A549 (cell line): ENCODE measurements at regions of chr15 and their contacts with region 1.

Region 1: GRCh38 chr15:33215941-33216872 is 21.7 kb upstream of the FMN1 start:
- DNase-seq: peak in 1 of 2 experiments; percentile 53
- ATAC-seq: peak; percentile 59 to 75; a peak in 4 of 6 replicates
- H3K4me3 ChIP-seq: no peak overlapping the region
- H3K27ac ChIP-seq: no peak overlapping the region
- H3K4me1 ChIP-seq: no peaks in the 10 kb centered on the region
- CTCF ChIP-seq: peak; percentile 72
- EP300 ChIP-seq: no peak
- POLR2A ChIP-seq: no peak
- RAD21 ChIP-seq: peak; percentile 30 to 47; a peak in 3 of 5 replicates

Region 2: DNA sequence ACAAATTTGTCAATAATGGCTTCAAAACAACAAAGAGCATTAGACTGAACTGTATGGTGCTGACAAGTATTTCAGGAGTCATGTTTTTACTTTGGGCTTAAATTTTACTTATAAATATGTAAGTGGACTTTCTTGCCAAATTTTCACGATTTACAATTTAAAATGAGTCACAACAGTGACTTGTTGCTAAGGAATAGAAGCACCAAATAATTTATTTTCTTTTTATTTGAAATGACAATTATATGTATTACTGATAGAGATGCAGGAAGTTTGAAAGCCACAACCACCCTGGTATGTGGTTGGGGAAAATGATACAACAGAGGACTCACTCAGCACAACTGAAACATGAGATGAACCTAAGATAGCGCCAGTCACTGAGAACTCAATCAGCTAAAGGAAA is 112.0 kb before region 1 on chr15:
- CTCF ChIA-PET with region 1: no interaction called
- POLR2A ChIA-PET with region 1: no interaction called
- DNase-seq: no peak
- ATAC-seq: no peak
- H3K4me3 ChIP-seq: no peak overlapping the region
- H3K27ac ChIP-seq: no peak overlapping the region
- H3K4me1 ChIP-seq: no peaks in the 10 kb centered on the region
- CTCF ChIP-seq: no peak
- EP300 ChIP-seq: no peak
- POLR2A ChIP-seq: no peak
- RAD21 ChIP-seq: no peak

Region 3: DNA sequence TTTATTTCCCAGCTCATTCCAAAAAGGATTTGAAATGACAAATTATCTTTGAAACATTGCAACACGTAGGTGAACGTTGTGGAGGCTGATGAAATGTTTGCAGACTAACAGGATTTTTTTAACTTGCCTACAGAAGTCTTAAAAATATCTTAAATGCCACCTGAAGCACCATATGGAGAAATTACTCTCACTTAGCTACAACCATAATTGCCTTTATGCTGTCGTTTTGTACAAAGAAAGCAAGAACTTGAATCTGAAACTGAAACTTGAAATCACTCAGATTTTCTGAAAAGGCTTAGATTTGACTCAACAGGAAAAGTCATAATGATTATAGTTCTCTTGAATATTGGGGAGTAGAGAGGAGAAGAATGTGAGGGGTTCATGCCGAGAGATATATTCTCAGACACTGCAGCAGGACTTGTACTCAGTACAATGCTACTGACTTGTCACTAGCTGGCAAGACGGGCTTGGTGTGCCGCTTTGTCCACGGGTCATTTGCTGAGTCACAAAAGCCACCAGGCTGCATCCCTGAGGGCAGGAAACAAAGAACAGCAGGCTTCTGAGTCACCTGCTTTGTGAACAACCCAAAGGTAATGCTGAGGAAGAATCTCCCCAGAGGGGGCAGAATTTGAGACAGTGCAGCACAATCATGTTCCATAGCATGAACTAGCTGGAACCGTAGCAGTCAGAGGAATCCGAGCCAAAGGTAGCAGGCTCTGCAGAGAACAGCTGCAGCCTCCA is 14.5 kb before region 1 on chr15:
- CTCF ChIA-PET with region 1: interaction called, 29 read pairs
- POLR2A ChIA-PET with region 1: no interaction called
- DNase-seq: peak; percentile 91 to 96
- ATAC-seq: peak; percentile 96
- H3K4me3 ChIP-seq: peak overlapping the region; percentile 26
- H3K27ac ChIP-seq: peak overlapping the region; percentile 76
- H3K4me1 ChIP-seq: peaks cover 31% of the 10 kb centered on the region
- CTCF ChIP-seq: peak; percentile 51
- EP300 ChIP-seq: 0 out of 5 replicates have a peak, but pooled peaks of 1 of the 2 experiments have one; percentile 12
- POLR2A ChIP-seq: no peak
- RAD21 ChIP-seq: peak; percentile 8 to 38; a peak in 2 of 5 replicates

Region 4: GRCh38 chr15:33226559-33227181 is 10.5 kb after region 1 on chr15:
- CTCF ChIA-PET with region 1: interaction called, 19 read pairs
- POLR2A ChIA-PET with region 1: no interaction called
- DNase-seq: peak; percentile 85 to 86
- ATAC-seq: peak; percentile 88 to 97
- H3K4me3 ChIP-seq: no peak overlapping the region
- H3K27ac ChIP-seq: no peak overlapping the region
- H3K4me1 ChIP-seq: no peaks in the 10 kb centered on the region
- CTCF ChIP-seq: peak; percentile 57
- EP300 ChIP-seq: no peak
- POLR2A ChIP-seq: no peak
- RAD21 ChIP-seq: peak; percentile 37 to 39; a peak in 4 of 5 replicates

Region 5: GRCh38 chr15:33243869-33244268 is 27.7 kb after region 1 on chr15:
- CTCF ChIA-PET with region 1: no interaction called
- POLR2A ChIA-PET with region 1: no interaction called
- DNase-seq: peak; percentile 86 to 92
- ATAC-seq: peak; percentile 89 to 91
- H3K4me3 ChIP-seq: no peak overlapping the region
- H3K27ac ChIP-seq: peak overlapping the region; percentile 58 to 74; a peak in 5 of 6 replicates
- H3K4me1 ChIP-seq: peaks cover 39% of the 10 kb centered on the region
- CTCF ChIP-seq: no peak
- EP300 ChIP-seq: peak; percentile 64 to 73; a peak in 2 of 5 replicates
- POLR2A ChIP-seq: no peak
- RAD21 ChIP-seq: no peak; a peak in 1 of 5 replicates